Activated T-helper 1 cell treated with anti-CD3 and anti-CD28 coated beads, Interleukin-12 subunit alpha, Interleukin-12 subunit beta, Interleukin-2, Interleukin-4 antibody, amounts not matched to agents 30 ng/mL and 10 ng/mL and 1 ng/mL, durations not matched to agents 14 hours and 24 hours and 36 hours (primary cell): ENCODE measurements at regions of chr7 and their contacts with region 1.

Region 1: DNA sequence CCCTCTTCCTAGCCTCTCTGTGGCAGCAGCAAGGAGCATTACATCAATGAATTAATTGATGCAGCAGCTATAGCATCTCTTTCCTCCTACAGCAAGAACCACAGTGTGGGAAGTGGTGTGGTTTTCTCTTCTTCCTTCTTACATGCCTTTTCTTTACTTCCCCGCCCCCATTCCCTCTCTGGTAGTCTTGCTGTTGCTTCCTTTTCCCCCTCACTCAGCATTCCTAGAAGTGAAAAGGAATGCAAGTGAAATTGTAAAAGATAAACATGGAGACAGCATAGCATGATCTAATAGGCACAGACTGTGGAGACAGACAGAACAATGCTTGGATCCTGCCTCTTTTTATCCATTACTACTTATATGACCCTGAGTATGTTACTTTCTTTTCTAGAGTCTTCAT is 370.5 kb upstream of the BMPER start:
- DNase-seq: no peak
- H3K4me3 Mint-ChIP-seq: no peak overlapping the region
- H3K27ac Mint-ChIP-seq: no peak overlapping the region
- H3K4me1 Mint-ChIP-seq: no peaks in the 10 kb centered on the region
- H3K27me3 Mint-ChIP-seq: no peaks in the 10 kb centered on the region

Region 2: GRCh38 chr7:33471636-33472242 is 63.1 kb before region 1 on chr7:
- intact Hi-C with region 1: loop called (anchors 10 kb)
- DNase-seq: no peak
- H3K4me3 Mint-ChIP-seq: no peak overlapping the region
- H3K27ac Mint-ChIP-seq: no peak overlapping the region
- H3K4me1 Mint-ChIP-seq: no peaks in the 10 kb centered on the region
- H3K27me3 Mint-ChIP-seq: no peaks in the 10 kb centered on the region

Region 3: DNA sequence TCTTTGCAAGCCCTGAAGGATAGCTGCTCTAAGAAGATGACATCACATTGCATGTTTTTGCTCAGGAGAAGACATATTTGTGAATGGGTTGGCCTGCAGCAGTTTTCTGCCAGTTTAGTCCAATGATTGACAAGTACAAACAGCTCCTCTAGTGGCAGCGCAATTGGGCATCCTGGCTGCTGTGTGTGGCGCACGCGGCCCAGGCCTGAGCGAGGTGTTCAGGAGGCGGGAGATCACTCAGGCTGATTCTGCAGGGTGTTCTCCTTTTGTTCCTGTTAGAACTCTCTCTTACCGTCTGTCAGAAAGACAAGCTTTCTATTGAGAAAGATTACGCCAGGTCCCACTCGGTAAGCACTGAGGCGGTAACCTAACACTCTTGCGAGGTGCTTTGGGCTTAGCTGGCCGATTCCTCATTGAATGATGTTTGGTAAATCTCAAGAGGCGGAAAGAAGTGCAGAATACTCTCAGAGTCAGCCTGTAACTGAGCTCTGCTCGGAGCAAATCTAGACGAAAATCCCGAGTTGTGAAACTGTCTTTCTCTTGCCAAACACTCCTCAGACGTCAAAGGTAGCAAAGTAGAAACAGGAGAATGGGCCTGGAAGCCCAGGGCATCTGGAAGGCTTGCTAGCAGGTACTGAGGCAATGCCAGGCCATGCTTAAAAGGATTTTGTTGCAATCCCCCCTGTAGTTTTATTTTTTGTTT is 151.3 kb after region 1 on chr7:
- intact Hi-C with region 1: no loop called
- DNase-seq: no peak
- H3K4me3 Mint-ChIP-seq: no peak overlapping the region
- H3K27ac Mint-ChIP-seq: no peak overlapping the region
- H3K4me1 Mint-ChIP-seq: no peaks in the 10 kb centered on the region
- H3K27me3 Mint-ChIP-seq: no peaks in the 10 kb centered on the region